CD4-positive, alpha-beta T cell (primary cell): ENCODE measurements at regions of chr7 and their contacts with region 1.

Region 1: DNA sequence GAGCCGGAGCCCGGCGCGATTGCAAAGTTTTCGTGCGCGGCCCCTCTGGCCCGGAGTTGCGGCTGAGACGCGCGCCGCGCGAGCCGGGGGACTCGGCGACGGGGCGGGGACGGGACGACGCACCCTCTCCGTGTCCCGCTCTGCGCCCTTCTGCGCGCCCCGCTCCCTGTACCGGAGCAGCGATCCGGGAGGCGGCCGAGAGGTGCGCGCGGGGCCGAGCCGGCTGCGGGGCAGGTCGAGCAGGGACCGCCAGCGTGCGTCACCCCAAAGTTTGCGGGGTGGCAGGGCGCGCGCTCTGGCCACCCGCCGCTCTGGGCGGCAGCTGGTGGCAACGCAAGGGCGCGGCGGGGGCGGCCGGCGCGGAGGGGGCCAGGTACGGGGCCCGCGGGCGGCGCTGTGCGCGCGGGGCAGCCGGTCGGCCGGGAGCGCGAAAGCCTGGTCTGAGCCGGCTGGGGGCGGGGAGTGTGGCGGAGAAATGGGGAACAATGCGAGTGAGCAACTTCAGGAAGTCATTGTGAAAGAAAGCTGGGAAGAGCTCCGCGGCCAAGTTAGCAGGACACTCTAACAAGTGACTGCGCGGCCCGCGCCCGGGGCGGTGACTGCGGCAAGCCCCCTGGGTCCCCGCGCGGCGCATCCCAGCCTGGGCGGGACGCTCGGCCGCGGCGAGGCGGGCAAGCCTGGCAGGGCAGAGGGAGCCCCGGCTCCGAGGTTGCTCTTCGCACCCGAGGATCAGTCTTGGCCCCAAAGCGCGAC is at the start of gene IKZF1:
- DNase-seq: peak in 12 of 14 experiments; percentile 31 to 81 (median 62)
- ATAC-seq: peak; percentile 25
- H3K4me3 ChIP-seq: peak within 1 kb of the TSS; percentile 87
- H3K4me3 Mint-ChIP-seq: peak within 1 kb of the TSS; percentile 100
- H3K27ac ChIP-seq: peak within 1 kb of the TSS; percentile 67 to 93
- H3K27ac Mint-ChIP-seq: peak within 1 kb of the TSS; percentile 90
- H3K4me1 ChIP-seq: peaks cover 40% of the 10 kb centered on the region
- H3K4me1 Mint-ChIP-seq: peaks cover 63% of the 10 kb centered on the region
- H3K27me3 ChIP-seq: no peaks in the 10 kb centered on the region
- H3K27me3 Mint-ChIP-seq: no peaks in the 10 kb centered on the region
- CTCF ChIP-seq: no peak
- total RNA-seq, gene IKZF1: 297 to 300 TPM

Region 2: GRCh38 chr7:50142425-50143017 is 161.8 kb before region 1 on chr7:
- CTCF ChIA-PET with region 1: no interaction called
- POLR2A ChIA-PET with region 1: no interaction called
- intact Hi-C with region 1: loop called in 1 of 2 experiments (anchors 5 kb)
- DNase-seq: peak in 7 of 14 experiments; percentile 24 to 83 (median 66)
- ATAC-seq: peak; percentile 75
- H3K4me3 ChIP-seq: no peak overlapping the region
- H3K4me3 Mint-ChIP-seq: peak overlapping the region; percentile 44
- H3K27ac ChIP-seq: no peak overlapping the region
- H3K27ac Mint-ChIP-seq: peak overlapping the region; percentile 35
- H3K4me1 ChIP-seq: peaks cover 15% of the 10 kb centered on the region
- H3K4me1 Mint-ChIP-seq: peaks cover 33% of the 10 kb centered on the region
- H3K27me3 ChIP-seq: no peaks in the 10 kb centered on the region
- H3K27me3 Mint-ChIP-seq: no peaks in the 10 kb centered on the region
- CTCF ChIP-seq: peak; percentile 83

Region 3: DNA sequence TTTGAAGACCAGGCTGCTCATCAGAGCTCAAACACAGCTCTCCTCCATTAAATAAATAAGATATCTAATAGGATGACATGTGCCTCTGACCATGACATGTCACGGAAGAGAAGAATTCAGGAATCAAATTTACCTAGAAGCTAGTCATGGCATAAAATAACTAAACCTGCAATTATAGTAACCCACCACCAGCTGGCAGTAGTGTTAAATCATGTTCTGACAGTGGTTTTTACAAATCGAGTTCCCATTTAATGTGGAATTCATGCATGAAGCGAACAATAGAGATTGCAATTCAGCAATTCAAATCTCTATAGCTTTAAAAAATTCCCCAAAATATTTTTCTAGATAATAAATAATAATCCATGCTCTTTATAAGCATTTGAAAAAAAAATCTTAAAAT is 74.4 kb before region 1 on chr7:
- CTCF ChIA-PET with region 1: interaction called, 3 read pairs
- POLR2A ChIA-PET with region 1: interaction called, 13 read pairs
- intact Hi-C with region 1: no loop called
- DNase-seq: peak in 4 of 14 experiments; percentile 36 to 45 (median 44)
- ATAC-seq: no peak
- H3K4me3 ChIP-seq: no peak overlapping the region
- H3K4me3 Mint-ChIP-seq: no peak overlapping the region
- H3K27ac ChIP-seq: no peak overlapping the region
- H3K27ac Mint-ChIP-seq: no peak overlapping the region
- H3K4me1 ChIP-seq: peaks cover 20% of the 10 kb centered on the region
- H3K4me1 Mint-ChIP-seq: peaks cover 42% of the 10 kb centered on the region
- H3K27me3 ChIP-seq: no peaks in the 10 kb centered on the region
- H3K27me3 Mint-ChIP-seq: no peaks in the 10 kb centered on the region
- CTCF ChIP-seq: peak; percentile 50

Region 4: DNA sequence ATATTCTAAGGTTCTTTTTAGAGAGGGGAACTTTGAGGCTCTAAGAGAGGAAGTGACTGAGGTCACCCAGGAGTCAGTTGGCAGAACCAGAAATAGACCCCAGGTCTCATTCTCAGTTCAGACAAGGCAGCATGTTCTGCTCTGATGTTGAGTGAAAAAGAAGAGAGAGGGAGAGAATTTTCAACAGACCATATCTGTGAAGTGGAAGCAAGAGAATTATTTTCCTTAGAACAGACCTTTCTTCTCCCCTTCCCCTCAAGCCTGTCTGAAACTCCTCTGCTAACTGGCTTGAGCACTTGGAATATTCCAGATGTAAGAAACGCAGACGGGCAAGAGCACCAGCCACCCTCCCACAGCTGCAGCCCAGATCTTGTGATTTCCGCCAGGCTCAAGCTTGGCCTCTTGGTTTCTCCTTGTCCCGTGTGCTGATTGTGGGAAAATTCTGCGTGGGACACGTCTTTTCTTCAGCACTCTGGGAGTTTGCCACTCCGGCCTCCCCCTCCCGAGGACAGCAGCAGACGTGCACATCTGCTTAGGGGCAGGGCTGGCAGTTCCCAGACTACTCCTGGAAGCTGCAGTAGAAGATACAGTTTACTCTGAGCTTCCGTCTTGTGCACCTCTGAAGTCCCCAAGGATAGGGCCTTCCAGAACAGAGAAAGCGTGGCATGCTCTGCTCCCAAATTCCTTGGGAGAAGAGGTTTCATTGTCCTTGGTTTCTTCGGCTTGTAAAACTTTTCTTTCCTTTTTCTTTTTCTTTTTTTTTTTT is 22.5 kb before region 1 on chr7:
- CTCF ChIA-PET with region 1: interaction called, 4 read pairs
- POLR2A ChIA-PET with region 1: interaction called, 6 read pairs
- intact Hi-C with region 1: loop called in 1 of 2 experiments (anchors 2 kb)
- DNase-seq: peak in 2 of 14 experiments; percentile 34 to 44
- ATAC-seq: peak; percentile 62
- H3K4me3 ChIP-seq: peak overlapping the region; percentile 1
- H3K4me3 Mint-ChIP-seq: peak overlapping the region; percentile 77
- H3K27ac ChIP-seq: peak overlapping the region in 1 of 2 donors; percentile 52
- H3K27ac Mint-ChIP-seq: peak overlapping the region; percentile 70
- H3K4me1 ChIP-seq: peaks cover 30% of the 10 kb centered on the region
- H3K4me1 Mint-ChIP-seq: peaks cover 76% of the 10 kb centered on the region
- H3K27me3 ChIP-seq: no peaks in the 10 kb centered on the region
- H3K27me3 Mint-ChIP-seq: no peaks in the 10 kb centered on the region
- CTCF ChIP-seq: no peak

Region 5: DNA sequence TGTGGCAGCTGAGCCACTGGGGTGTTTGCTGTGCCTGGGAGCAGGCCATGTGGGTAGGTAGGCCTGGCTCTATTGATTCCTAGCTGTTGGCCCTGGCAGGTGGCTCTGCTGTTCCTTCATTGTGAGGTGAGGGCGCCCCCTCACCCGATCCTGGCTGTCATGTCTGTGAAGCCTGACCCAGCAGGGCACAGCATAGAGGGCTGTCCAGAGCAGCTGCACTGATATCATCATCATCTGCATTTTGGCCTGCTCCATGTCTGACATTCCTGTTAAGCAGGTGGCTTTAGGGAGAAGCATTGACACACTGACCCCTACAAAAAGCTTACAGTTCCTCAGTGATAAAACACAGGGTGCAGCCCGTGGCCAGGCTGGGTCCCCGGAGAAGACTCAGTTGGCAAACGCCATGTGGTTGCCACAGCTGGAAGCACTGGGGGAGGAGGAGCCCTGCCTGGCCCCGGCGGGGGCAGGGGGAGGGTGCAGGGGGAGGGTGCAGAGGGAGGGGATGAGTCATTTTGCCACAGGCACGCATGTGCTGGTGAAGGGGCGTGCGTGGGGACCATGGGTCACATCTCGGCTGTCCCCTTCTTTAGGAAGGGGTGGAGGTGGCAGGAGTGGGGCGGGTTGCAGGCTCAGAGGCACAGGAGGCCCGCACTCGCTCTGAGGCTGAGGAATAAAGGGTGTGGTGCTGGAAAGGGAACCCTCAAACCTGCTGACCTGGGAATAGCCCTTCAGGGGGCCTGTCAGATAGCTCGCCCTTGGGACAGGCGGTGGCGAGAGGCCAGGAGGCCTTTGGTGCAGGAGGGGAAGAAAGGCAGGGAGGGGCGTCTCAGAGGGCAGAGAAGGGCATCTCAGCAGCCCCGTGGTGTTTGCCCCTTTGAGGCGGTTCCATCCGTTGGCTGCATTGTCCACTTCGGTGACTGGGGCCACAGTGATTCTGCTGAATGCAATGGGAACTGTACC is 31.7 kb after region 1 on chr7:
- CTCF ChIA-PET with region 1: interaction called, 13 read pairs
- POLR2A ChIA-PET with region 1: interaction called, 2,111 read pairs
- intact Hi-C with region 1: no loop called
- DNase-seq: peak in 13 of 14 experiments; percentile 73 to 91 (median 85)
- ATAC-seq: peak; percentile 50
- H3K4me3 ChIP-seq: peak overlapping the region; percentile 24
- H3K4me3 Mint-ChIP-seq: no peak overlapping the region
- H3K27ac ChIP-seq: peak overlapping the region; percentile 87 to 91
- H3K27ac Mint-ChIP-seq: no peak overlapping the region
- H3K4me1 ChIP-seq: peaks cover 94% of the 10 kb centered on the region
- H3K4me1 Mint-ChIP-seq: peaks cover 14% of the 10 kb centered on the region
- H3K27me3 ChIP-seq: no peaks in the 10 kb centered on the region
- H3K27me3 Mint-ChIP-seq: no peaks in the 10 kb centered on the region
- CTCF ChIP-seq: no peak

Region 6: DNA sequence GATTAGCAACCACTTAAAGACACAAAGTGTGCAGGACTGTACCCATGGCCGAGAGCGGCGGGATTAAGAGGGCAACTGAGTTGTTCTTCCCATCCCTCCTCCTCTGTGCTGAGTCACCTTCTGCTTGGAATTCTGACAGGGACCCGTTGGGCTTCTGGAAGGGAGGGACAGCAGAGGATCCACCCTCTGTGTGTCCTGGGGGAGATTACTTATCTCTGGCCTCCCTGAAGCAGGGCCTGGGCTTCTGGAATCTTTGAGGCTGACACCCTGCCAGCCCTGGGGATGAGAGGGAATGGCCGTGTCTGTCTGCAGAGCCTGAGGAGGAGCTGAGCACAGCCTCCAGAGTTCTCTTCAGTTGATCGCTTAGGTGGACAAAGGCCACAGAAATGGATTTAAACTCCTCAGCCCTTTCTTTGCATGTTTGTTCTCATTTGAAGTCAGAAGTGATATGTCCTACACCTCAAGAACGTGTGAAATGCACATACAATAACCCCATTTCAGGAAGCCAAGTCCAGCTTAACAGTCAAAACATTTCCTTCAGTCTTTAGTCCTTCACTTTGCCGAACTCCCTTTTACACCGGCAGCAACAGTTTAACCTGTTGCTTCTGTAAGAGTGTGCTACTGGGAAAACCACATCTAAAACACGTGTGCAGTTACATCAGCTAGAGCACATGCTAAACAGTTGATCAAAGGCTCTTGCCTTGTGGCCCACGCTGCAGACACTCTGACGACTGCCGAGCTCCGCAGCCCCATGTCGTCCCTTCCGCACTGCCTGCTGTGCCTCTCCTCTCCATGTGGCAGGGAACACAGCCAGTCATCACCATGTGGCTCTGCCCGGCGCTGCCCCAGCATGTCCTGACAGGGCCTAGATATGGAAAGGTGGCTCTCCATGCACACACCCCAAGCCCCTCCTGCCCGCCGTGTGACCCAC is 55.9 kb after region 1 on chr7:
- CTCF ChIA-PET with region 1: interaction called, 3 read pairs
- POLR2A ChIA-PET with region 1: interaction called, 2,111 read pairs
- intact Hi-C with region 1: loop called in 1 of 2 experiments (anchors 2 kb)
- DNase-seq: peak; percentile 71 to 96 (median 79)
- ATAC-seq: peak; percentile 86
- H3K4me3 ChIP-seq: peak overlapping the region; percentile 17
- H3K4me3 Mint-ChIP-seq: peak overlapping the region; percentile 76
- H3K27ac ChIP-seq: peak overlapping the region; percentile 86 to 96
- H3K27ac Mint-ChIP-seq: no peak overlapping the region
- H3K4me1 ChIP-seq: peaks cover 96% of the 10 kb centered on the region
- H3K4me1 Mint-ChIP-seq: peaks cover 96% of the 10 kb centered on the region
- H3K27me3 ChIP-seq: no peaks in the 10 kb centered on the region
- H3K27me3 Mint-ChIP-seq: no peaks in the 10 kb centered on the region
- CTCF ChIP-seq: no peak

Region 7: DNA sequence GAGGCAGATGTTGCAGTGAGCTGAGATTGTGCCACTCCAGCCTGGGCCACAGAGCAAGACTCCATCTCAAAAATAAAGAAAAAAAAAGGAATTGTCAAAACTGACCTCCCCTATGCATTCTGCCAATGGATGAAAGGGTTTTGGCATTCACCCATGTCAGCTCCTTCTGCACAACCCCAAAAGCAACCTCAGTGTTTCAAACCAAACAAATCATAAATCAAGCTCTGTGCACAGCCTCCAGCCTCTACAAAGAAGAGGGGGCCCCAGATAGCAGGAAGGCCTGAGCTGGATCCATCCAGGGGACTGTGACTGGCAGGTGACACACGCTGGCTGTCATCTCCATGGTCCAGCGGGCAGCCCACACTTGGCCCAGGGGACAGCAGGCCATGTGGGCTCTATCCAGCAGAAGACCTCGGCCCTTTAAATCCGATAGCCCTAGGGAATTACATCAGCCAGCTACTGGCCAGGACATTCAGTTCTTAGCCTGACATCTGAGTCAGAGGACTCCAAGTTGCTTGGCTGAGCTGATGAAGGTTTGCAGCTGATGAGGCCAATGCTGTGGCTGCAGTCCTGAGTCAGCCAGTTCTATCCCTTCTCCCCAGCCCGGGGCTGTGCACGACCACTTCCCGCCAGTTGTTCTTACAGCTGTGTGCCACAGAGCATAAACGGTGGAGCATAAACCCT is 197.8 kb after region 1 on chr7:
- CTCF ChIA-PET with region 1: no interaction called
- POLR2A ChIA-PET with region 1: no interaction called
- intact Hi-C with region 1: no loop called
- DNase-seq: no peak
- ATAC-seq: no peak
- H3K4me3 ChIP-seq: no peak overlapping the region
- H3K4me3 Mint-ChIP-seq: no peak overlapping the region
- H3K27ac ChIP-seq: no peak overlapping the region
- H3K27ac Mint-ChIP-seq: no peak overlapping the region
- H3K4me1 ChIP-seq: no peaks in the 10 kb centered on the region
- H3K4me1 Mint-ChIP-seq: no peaks in the 10 kb centered on the region
- H3K27me3 ChIP-seq: no peaks in the 10 kb centered on the region
- H3K27me3 Mint-ChIP-seq: peaks cover 27% of the 10 kb centered on the region
- CTCF ChIP-seq: no peak

Region 8: GRCh38 chr7:51029701-51030191 is 725.4 kb after region 1 on chr7:
- CTCF ChIA-PET with region 1: no interaction called
- POLR2A ChIA-PET with region 1: no interaction called
- intact Hi-C with region 1: no loop called
- DNase-seq: no peak
- ATAC-seq: no peak
- H3K4me3 ChIP-seq: no peak overlapping the region
- H3K4me3 Mint-ChIP-seq: no peak overlapping the region
- H3K27ac ChIP-seq: no peak overlapping the region
- H3K27ac Mint-ChIP-seq: no peak overlapping the region
- H3K4me1 ChIP-seq: no peaks in the 10 kb centered on the region
- H3K4me1 Mint-ChIP-seq: no peaks in the 10 kb centered on the region
- H3K27me3 ChIP-seq: no peaks in the 10 kb centered on the region
- H3K27me3 Mint-ChIP-seq: no peaks in the 10 kb centered on the region
- CTCF ChIP-seq: no peak

Region 9: GRCh38 chr7:51528172-51528571 is 1223.8 kb after region 1 on chr7:
- CTCF ChIA-PET with region 1: no interaction called
- POLR2A ChIA-PET with region 1: no interaction called
- intact Hi-C with region 1: no loop called
- DNase-seq: no peak
- ATAC-seq: no peak
- H3K4me3 ChIP-seq: no peak overlapping the region
- H3K4me3 Mint-ChIP-seq: no peak overlapping the region
- H3K27ac ChIP-seq: no peak overlapping the region
- H3K27ac Mint-ChIP-seq: no peak overlapping the region
- H3K4me1 ChIP-seq: no peaks in the 10 kb centered on the region
- H3K4me1 Mint-ChIP-seq: no peaks in the 10 kb centered on the region
- H3K27me3 ChIP-seq: no peaks in the 10 kb centered on the region
- H3K27me3 Mint-ChIP-seq: no peaks in the 10 kb centered on the region
- CTCF ChIP-seq: no peak